Activated CD4-positive, alpha-beta T cell treated with anti-CD3 and anti-CD28 coated beads for 36 hours (primary cell): ENCODE measurements at regions of chr6 and their contacts with region 1.

Region 1: GRCh38 chr6:149235130-149235561 is 82.4 kb upstream of the TAB2 start:
- DNase-seq: peak; percentile 20
- ATAC-seq: no peak
- H3K4me3 Mint-ChIP-seq: no peak overlapping the region
- H3K27ac Mint-ChIP-seq: peak overlapping the region; percentile 98
- H3K4me1 Mint-ChIP-seq: peaks cover 44% of the 10 kb centered on the region
- H3K27me3 Mint-ChIP-seq: no peaks in the 10 kb centered on the region

Region 2: GRCh38 chr6:148693882-148694484 is 541.2 kb before region 1 on chr6:
- CTCF ChIA-PET with region 1: no interaction called
- POLR2A ChIA-PET with region 1: no interaction called
- intact Hi-C with region 1: no loop called
- DNase-seq: no peak
- ATAC-seq: no peak
- H3K4me3 Mint-ChIP-seq: no peak overlapping the region
- H3K27ac Mint-ChIP-seq: no peak overlapping the region
- H3K4me1 Mint-ChIP-seq: no peaks in the 10 kb centered on the region
- H3K27me3 Mint-ChIP-seq: no peaks in the 10 kb centered on the region

Region 3: DNA sequence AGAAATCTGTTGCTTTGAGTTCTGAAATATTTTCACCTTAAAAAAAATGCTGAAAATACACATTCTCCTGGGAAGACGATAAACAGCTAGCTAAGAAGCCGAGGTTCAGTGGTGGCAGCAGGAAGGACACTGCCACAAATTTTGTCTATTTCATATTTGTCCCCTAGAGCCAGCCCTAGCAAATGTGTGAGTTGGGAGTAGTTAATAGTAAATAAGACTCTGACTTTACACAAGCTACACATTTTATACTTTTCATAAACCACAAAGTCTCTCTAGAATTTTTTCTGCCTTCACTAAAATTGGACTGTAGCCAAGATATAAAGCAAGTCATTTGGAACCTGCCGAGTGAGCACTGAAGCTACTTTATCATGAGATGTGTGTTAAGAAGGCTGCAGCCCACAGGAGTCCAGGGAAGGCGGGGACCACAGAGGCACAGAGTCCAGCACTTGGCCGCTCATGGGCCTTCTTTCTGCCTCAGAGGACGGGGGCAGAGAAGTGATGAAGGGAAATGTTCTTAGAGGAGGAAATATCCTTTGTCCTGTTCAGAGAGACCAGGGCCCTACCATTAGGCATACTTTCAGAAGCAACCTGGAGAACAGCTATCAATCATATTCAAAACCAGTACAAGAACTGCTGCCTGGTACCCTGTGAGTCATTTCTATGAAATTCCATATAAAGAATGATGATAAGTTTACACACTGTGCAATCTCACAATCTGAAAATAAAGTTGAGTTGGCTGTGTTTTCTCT is 159.4 kb before region 1 on chr6:
- CTCF ChIA-PET with region 1: no interaction called
- POLR2A ChIA-PET with region 1: no interaction called
- intact Hi-C with region 1: loop called (anchors 2 to 5 kb)
- DNase-seq: peak; percentile 41
- ATAC-seq: peak; percentile 77
- H3K4me3 Mint-ChIP-seq: peak overlapping the region; percentile 21
- H3K27ac Mint-ChIP-seq: peak overlapping the region; percentile 52
- H3K4me1 Mint-ChIP-seq: peaks cover 36% of the 10 kb centered on the region
- H3K27me3 Mint-ChIP-seq: no peaks in the 10 kb centered on the region

Region 4: GRCh38 chr6:149147938-149148718 is 87.0 kb before region 1 on chr6:
- CTCF ChIA-PET with region 1: no interaction called
- POLR2A ChIA-PET with region 1: no interaction called
- intact Hi-C with region 1: loop called (anchors 2 kb)
- DNase-seq: no peak
- ATAC-seq: peak; percentile 63
- H3K4me3 Mint-ChIP-seq: peak overlapping the region; percentile 9
- H3K27ac Mint-ChIP-seq: peak overlapping the region; percentile 82
- H3K4me1 Mint-ChIP-seq: peaks cover 60% of the 10 kb centered on the region
- H3K27me3 Mint-ChIP-seq: no peaks in the 10 kb centered on the region

Region 5: GRCh38 chr6:149211046-149211571 is 24.0 kb before region 1 on chr6:
- CTCF ChIA-PET with region 1: interaction called, 4 read pairs
- POLR2A ChIA-PET with region 1: no interaction called
- intact Hi-C with region 1: loop called (anchors 1 kb)
- DNase-seq: peak; percentile 36
- ATAC-seq: peak; percentile 54
- H3K4me3 Mint-ChIP-seq: no peak overlapping the region
- H3K27ac Mint-ChIP-seq: peak overlapping the region; percentile 82
- H3K4me1 Mint-ChIP-seq: peaks cover 3% of the 10 kb centered on the region
- H3K27me3 Mint-ChIP-seq: no peaks in the 10 kb centered on the region

Region 6: GRCh38 chr6:149271348-149272340 is 36.5 kb after region 1 on chr6:
- CTCF ChIA-PET with region 1: no interaction called
- POLR2A ChIA-PET with region 1: no interaction called
- intact Hi-C with region 1: loop called (anchors 1 to 2 kb)
- DNase-seq: peak; percentile 80
- ATAC-seq: peak; percentile 83
- H3K4me3 Mint-ChIP-seq: peak overlapping the region; percentile 26
- H3K27ac Mint-ChIP-seq: peak overlapping the region; percentile 89
- H3K4me1 Mint-ChIP-seq: peaks cover 35% of the 10 kb centered on the region
- H3K27me3 Mint-ChIP-seq: no peaks in the 10 kb centered on the region